ENCODE measurements at regions of chr2 and their contacts with region 1.

Region 1: DNA sequence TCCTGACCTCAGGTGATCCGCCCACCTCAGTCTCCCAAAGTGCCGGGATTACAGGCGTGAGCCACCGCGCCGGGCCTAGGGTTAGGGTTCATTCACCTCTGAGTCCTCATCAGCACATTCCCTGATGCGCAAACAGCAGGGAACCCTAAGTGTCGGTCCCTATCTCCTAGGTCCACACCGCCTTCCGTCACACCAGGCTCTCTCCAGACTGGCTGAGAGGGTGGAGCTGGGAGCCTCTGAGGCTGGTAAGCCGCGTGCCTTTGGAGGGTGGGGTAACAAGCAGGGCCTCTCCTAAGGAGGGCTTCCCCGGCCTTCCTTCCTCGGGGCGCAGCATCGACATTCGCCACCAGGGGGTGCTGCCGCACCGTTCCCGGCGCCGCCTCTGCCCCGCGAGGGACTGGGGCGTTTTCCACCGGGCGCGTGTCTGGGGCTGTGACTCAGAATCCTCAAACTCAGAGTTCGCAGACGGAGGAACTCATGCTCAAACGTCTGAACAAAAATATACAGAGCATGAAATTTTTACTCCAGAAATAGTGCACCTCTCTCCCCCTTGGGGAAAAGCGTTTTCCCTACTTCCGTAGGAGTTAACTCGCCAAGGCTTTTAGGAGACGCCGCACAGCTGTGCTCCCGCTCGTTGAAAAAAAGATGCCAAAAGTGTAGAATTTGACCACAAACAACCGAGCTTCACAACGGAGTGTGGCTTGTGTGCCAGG is 63.9 kb upstream of the ASAP2 start:
- DNase-seq: peak; percentile 82 to 87 (median 85)
- H3K4me3 ChIP-seq: peak overlapping the region in 1 of 3 experiments; percentile 45
- H3K4me3 Mint-ChIP-seq: peak overlapping the region; percentile 45 to 76
- H3K27ac ChIP-seq: no peak overlapping the region
- H3K27ac Mint-ChIP-seq: peak overlapping the region in 1 of 7 donors; percentile 22
- H3K4me1 ChIP-seq: peaks cover 9 to 13% of the 10 kb centered on the region in 2 donors
- H3K4me1 Mint-ChIP-seq: peaks cover 24% of the 10 kb centered on the region
- H3K27me3 ChIP-seq: no peaks in the 10 kb centered on the region
- H3K27me3 Mint-ChIP-seq: peaks cover 7 to 12% (median 9%) of the 10 kb centered on the region in 3 donors
- CTCF ChIP-seq: peak; percentile 98

Region 2: DNA sequence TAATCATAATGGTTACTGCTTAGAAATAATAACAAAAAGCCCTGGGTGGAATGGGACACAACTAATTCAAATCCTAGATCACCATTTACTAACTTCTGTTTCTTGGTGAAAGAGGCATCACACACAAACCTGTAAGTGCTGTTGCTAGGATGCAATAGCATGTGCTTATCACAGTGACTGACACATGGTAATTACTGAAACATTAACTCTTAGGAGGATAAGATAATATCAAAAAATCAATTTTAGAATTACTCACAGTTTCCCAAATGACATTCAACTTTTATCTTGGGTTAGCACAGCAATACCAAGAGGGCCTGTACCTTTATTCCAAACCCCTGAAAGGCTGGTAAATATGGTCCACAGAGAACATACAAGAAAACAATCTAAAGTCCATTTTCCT is 208.4 kb before region 1 on chr2:
- intact Hi-C with region 1: no loop called
- DNase-seq: no peak
- H3K4me3 ChIP-seq: no peak overlapping the region
- H3K4me3 Mint-ChIP-seq: no peak overlapping the region
- H3K27ac ChIP-seq: no peak overlapping the region
- H3K27ac Mint-ChIP-seq: no peak overlapping the region
- H3K4me1 ChIP-seq: no peaks in the 10 kb centered on the region
- H3K4me1 Mint-ChIP-seq: no peaks in the 10 kb centered on the region
- H3K27me3 ChIP-seq: no peaks in the 10 kb centered on the region
- H3K27me3 Mint-ChIP-seq: peaks cover 0 to 3% (median 2%) of the 10 kb centered on the region in 3 donors
- CTCF ChIP-seq: no peak

Region 3: DNA sequence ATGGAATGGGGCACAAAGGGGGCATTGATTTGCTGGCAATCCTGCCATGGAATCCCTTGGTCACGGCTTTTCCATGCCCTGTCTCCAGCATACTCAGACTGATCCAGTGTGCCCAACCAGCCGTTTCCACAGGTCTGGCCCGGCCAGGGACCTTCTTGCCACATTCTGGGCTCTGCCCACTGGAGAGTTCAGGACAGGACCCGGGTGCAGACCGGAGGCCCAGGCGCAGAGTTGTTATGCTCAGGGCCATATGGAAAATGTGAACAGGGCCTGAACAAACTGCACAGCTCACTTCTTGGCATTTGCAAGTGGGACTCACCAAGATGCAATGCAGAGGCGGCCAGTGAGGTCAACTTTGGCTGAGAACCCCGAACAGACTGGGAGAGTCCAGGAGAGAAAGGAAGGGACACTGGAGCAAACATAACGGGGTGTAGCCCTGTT is 48.4 kb after region 1 on chr2:
- intact Hi-C with region 1: no loop called
- DNase-seq: no peak
- H3K4me3 ChIP-seq: peak overlapping the region in 1 of 3 experiments; percentile 4
- H3K4me3 Mint-ChIP-seq: peak overlapping the region in 1 of 2 donors; percentile 35
- H3K27ac ChIP-seq: peak overlapping the region; percentile 73 to 85
- H3K27ac Mint-ChIP-seq: peak overlapping the region; percentile 66 to 95 (median 90)
- H3K4me1 ChIP-seq: peaks cover 24 to 25% of the 10 kb centered on the region in 2 donors
- H3K4me1 Mint-ChIP-seq: peaks cover 31% of the 10 kb centered on the region
- H3K27me3 ChIP-seq: no peaks in the 10 kb centered on the region
- H3K27me3 Mint-ChIP-seq: peaks cover 0 to 5% (median under 1%) of the 10 kb centered on the region in 3 donors
- CTCF ChIP-seq: no peak

Region 4: GRCh38 chr2:9333591-9334171 is 191.0 kb after region 1 on chr2:
- intact Hi-C with region 1: loop called (anchors 10 kb)
- DNase-seq: peak; percentile 30 to 61 (median 38)
- H3K4me3 ChIP-seq: no peak overlapping the region
- H3K4me3 Mint-ChIP-seq: no peak overlapping the region
- H3K27ac ChIP-seq: no peak overlapping the region
- H3K27ac Mint-ChIP-seq: peak overlapping the region in 3 of 7 donors; percentile 27 to 77 (median 37)
- H3K4me1 ChIP-seq: peaks cover 26% of the 10 kb centered on the region in 2 donors
- H3K4me1 Mint-ChIP-seq: peaks cover 36% of the 10 kb centered on the region
- H3K27me3 ChIP-seq: no peaks in the 10 kb centered on the region
- H3K27me3 Mint-ChIP-seq: peaks cover 0 to 3% (median 1%) of the 10 kb centered on the region in 3 donors
- CTCF ChIP-seq: peak; percentile 52

Region 5: GRCh38 chr2:9423100-9423921 is 280.6 kb after region 1 on chr2 and contains the starts of genes CPSF3 and ITGB1BP1:
- intact Hi-C with region 1: loop called in 1 of 2 experiments (anchors 5 kb)
- DNase-seq: peak; percentile 94 to 97 (median 97)
- H3K4me3 ChIP-seq: peak within 1 kb of the TSS; percentile 71 to 97 (median 85)
- H3K4me3 Mint-ChIP-seq: peak within 1 kb of the TSS in 1 of 2 donors; percentile 96
- H3K27ac ChIP-seq: peak within 1 kb of the TSS; percentile 84 to 91
- H3K27ac Mint-ChIP-seq: peak within 1 kb of the TSS; percentile 83 to 96 (median 93)
- H3K4me1 ChIP-seq: peaks cover 26 to 30% of the 10 kb centered on the region in 2 donors
- H3K4me1 Mint-ChIP-seq: peaks cover 17% of the 10 kb centered on the region
- H3K27me3 ChIP-seq: no peaks in the 10 kb centered on the region
- H3K27me3 Mint-ChIP-seq: no peaks in the 10 kb centered on the region
- CTCF ChIP-seq: no peak
- polyA plus RNA-seq, gene CPSF3: 17.2 to 34.0 (median 26.6) TPM
- polyA plus RNA-seq, gene ITGB1BP1: 38.5 to 125 (median 116) TPM

Measured in CD14-positive monocyte (primary cell).